Mucosa of descending colon (tissue), 3 donors: ENCODE measurements at regions of chr11 and their contacts with region 1.

Region 1: GRCh38 chr11:96342961-96343711 is at the start of gene MAML2:
- DNase-seq: peak; percentile 93 to 95 (median 93)
- ATAC-seq: peak; percentile 90
- H3K4me3 ChIP-seq: peak within 1 kb of the TSS; percentile 37
- H3K4me1 ChIP-seq: peaks cover 29% of the 10 kb centered on the region
- CTCF ChIP-seq: peak; percentile 94
- total RNA-seq, gene MAML2: 15.2 to 26.4 (median 15.8) TPM

Region 2: DNA sequence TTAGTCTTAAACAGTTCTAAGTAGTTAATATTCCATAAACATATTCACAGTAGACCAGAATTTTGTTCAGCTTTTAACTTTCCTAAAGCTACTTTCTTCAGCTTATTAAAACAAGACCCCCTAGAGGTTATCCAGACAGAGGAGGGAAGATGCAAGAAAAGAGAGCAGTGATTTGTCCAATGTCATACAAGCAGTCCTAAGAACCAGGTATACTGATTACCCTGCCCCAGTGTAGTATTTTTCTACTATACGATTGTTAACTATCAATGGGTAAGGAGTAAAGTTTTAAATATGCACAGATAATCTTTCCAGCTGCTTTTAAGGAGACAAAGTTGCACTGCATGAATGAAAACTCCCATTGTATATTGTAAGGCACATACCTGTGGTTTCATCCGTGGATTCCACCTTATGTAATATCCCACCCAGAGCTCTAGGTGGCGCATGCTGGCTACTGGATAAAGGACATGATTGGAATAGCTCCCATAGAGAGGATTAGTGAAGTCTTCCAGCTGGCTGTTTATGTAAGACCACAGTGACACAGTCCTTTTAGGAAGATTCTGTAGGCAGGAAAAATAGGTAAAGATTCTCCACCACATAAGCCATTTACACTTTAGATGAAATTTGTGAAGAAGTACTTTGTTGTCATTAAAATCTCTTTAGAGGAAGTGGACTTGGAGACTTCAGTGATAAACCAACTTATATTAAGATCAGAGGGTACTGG is 507.2 kb before region 1 on chr11:
- intact Hi-C with region 1: loop called in 1 of 2 experiments (anchors 5 kb)
- DNase-seq: peak in 2 of 3 donors; percentile 50 to 67
- ATAC-seq: peak; percentile 96
- H3K4me3 ChIP-seq: no peak overlapping the region
- H3K4me1 ChIP-seq: no peaks in the 10 kb centered on the region
- CTCF ChIP-seq: peak; percentile 69

Region 3: GRCh38 chr11:96012086-96012824 is 330.9 kb before region 1 on chr11:
- intact Hi-C with region 1: loop called in 1 of 2 experiments (anchors 1 kb)
- DNase-seq: peak in 2 of 3 donors; percentile 41 to 59
- ATAC-seq: peak; percentile 99
- H3K4me3 ChIP-seq: no peak overlapping the region
- H3K4me1 ChIP-seq: peaks cover 15% of the 10 kb centered on the region
- CTCF ChIP-seq: peak; percentile 24

Region 4: DNA sequence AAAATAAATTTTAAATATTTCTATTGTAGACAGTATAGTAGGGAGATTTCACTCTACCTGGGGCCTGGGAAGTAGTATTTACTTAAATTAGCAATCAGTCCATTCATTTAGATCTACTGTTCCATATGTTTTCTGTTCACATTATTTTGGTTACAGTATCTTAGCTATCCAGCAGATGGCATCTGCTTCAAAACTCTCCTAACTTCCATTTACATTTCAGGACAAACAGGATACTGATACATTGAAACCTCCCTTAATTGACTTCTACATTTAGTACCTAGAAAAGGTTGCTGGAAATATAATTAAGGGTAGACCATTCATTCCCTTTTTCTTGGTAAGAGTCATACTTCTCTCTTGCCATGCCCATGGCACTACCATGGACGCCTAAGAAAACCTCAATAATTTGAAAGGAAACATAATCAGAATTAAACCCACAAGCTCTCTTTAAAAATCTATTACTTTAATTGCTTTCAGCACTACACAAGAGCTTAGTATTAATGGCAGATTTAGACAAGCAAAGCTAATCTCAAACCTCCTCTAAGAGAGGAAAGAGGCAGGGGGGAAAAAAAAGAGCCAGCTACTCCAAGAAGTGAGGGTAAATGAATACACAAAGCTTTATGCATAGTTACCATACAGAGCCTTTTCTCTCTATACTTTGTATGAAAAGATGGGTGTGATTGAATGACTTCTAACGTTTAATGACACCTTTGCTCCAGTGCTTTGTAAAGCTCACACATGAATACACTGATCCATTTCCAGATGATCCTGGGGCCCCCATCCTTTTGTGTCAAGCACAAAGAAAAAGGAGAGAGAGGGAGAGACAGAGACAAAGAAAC is 288.0 kb before region 1 on chr11:
- intact Hi-C with region 1: loop called (anchors 5 kb)
- DNase-seq: no peak
- ATAC-seq: peak; percentile 80
- H3K4me3 ChIP-seq: no peak overlapping the region
- H3K4me1 ChIP-seq: no peaks in the 10 kb centered on the region
- CTCF ChIP-seq: peak; percentile 21

Region 5: DNA sequence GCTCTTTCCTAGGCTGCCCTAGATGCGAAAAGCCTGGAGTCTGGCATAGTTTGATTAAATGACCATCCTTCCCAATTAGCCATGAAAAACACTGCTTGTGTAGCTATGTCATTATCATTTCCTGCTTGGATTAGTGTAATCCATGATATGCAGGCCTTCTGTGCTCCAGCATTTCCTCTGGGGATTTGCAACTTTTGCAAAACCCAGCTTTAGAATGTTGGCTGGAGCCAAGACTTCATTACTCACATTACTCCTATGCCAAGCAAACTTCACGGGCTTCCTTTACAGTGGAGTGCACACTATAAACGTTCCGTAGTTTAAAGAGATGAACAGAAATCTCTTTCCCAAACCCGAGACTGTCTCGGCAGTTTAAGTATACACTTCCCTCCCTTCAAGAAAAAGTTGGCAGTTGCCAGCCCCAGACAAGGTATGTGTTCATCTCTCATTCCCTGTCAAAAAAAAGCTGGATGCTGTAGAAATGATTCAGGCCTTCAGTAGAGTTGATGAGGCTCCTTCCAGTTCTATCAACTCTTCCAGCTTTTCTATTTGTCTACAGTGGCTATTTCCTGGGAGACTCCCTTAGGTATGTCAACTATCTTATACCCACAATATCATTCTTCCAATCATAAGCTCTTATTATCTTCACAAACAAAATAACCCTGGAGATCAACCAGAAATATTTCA is 180.2 kb before region 1 on chr11:
- intact Hi-C with region 1: no loop called
- DNase-seq: peak in 1 of 3 donors; percentile 24
- ATAC-seq: peak; percentile 27
- H3K4me3 ChIP-seq: no peak overlapping the region
- H3K4me1 ChIP-seq: no peaks in the 10 kb centered on the region
- CTCF ChIP-seq: no peak

Region 6: DNA sequence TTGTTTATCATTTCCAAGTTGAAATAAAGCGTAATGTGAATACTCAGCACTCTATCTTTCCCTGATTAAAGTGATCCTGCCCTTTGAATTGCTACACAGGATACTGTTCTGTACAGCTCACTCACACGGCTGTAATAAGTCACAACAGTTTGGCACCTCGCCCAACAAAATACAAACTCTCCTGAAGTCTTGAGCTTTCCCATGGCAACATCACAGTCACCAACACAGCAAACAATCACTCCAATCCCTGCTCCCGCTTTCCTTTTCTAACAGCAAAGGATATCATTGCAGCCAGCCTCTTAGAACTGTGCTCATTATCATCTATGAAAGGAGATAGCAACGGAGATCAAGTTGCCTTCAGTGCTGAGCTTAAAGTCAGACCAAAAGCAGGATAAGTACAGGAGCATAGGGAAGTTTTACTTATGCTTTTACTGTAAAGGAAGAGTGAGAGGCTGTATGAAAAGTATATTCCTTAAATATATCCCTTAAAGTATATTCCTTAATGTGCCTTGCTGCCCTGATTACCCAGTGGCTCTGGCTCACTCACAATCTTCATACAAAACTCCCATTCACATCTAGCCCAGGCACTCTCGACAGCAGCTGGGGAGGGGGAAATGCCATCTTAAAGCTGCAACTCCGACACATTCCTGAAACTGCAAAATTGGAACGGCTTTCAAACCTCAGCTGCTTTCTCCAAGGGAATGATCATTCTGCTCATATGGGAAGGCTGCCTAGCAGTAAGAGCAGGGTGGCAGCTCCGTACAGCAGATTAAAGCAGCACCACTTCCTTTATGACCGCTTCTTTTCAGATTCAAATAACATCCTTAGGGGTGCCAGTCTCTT is 36.0 kb before region 1 on chr11:
- intact Hi-C with region 1: loop called in 1 of 2 experiments (anchors 5 kb)
- DNase-seq: peak in 1 of 3 donors; percentile 94
- ATAC-seq: peak; percentile 86
- H3K4me3 ChIP-seq: no peak overlapping the region
- H3K4me1 ChIP-seq: peaks cover 69% of the 10 kb centered on the region
- CTCF ChIP-seq: no peak

Region 7: DNA sequence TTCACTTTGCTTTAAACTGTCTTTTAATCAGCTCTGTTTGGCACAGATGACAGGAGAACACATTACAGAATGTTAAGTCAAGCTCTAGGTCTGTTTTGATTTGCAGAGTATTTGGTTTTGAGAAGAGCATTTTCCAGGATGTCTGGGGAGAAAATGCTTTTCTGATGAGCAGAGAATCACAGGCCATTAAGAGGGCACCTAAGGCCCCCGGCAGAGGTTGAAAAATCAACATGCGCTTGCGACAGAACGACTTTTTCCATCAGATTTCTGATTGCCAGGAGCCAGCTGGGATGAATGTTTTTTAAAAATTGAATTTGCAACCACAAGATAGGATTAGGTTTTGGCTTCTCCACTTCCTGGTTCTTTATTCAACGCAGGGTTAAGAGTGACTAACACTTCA is 351.2 kb after region 1 on chr11:
- intact Hi-C with region 1: no loop called
- DNase-seq: no peak
- ATAC-seq: no peak
- H3K4me3 ChIP-seq: no peak overlapping the region
- H3K4me1 ChIP-seq: no peaks in the 10 kb centered on the region
- CTCF ChIP-seq: no peak

Region 8: DNA sequence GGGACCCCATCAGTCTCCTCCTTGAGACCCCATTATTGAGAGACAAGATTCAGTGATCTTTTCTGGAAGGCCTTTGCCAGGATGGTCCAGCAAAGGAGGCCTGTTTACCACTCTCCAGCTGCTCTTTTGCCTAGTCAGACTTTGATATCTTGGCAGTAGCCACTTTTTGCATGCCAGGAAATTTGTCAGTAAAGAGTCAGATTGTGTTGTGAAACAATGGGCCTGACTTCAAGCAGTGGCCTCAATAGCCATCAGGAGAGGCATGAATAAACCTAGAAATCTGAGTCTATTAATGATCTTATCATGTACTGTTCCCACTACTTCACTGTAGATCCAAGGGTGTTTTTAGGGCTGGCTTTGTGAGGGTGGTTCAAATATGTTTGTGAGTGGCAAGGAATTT is 526.1 kb after region 1 on chr11:
- intact Hi-C with region 1: no loop called
- DNase-seq: no peak
- ATAC-seq: no peak
- H3K4me3 ChIP-seq: no peak overlapping the region
- H3K4me1 ChIP-seq: no peaks in the 10 kb centered on the region
- CTCF ChIP-seq: no peak